ENCODE measurements at regions of chr19 and their contacts with region 1.

Region 1: GRCh38 chr19:6577476-6578125 is 13.3 kb downstream of the CD70 start:
- DNase-seq: peak; percentile 79 to 94 (median 90)
- H3K4me3 ChIP-seq: peak overlapping the region in 1 of 3 experiments; percentile 26
- H3K4me3 Mint-ChIP-seq: no peak overlapping the region
- H3K27ac ChIP-seq: peak overlapping the region; percentile 78 to 86
- H3K27ac Mint-ChIP-seq: peak overlapping the region in 4 of 7 donors; percentile 82 to 92 (median 92)
- H3K4me1 ChIP-seq: peaks cover 37 to 50% of the 10 kb centered on the region in 2 donors
- H3K4me1 Mint-ChIP-seq: peaks cover 22% of the 10 kb centered on the region
- H3K27me3 ChIP-seq: no peaks in the 10 kb centered on the region
- H3K27me3 Mint-ChIP-seq: peaks cover 2 to 5% (median 5%) of the 10 kb centered on the region in 3 donors
- CTCF ChIP-seq: no peak

Region 2: GRCh38 chr19:6530386-6531161 is 47.0 kb before region 1 on chr19 and contains the start of gene TNFSF9:
- intact Hi-C with region 1: loop called (anchors 5 kb)
- DNase-seq: peak; percentile 64 to 77 (median 70)
- H3K4me3 ChIP-seq: peak within 1 kb of the TSS; percentile 50 to 72 (median 52)
- H3K4me3 Mint-ChIP-seq: peak within 1 kb of the TSS; percentile 85 to 97
- H3K27ac ChIP-seq: peak within 1 kb of the TSS; percentile 17 to 30
- H3K27ac Mint-ChIP-seq: peak within 1 kb of the TSS; percentile 46 to 91 (median 82)
- H3K4me1 ChIP-seq: peaks cover 49 to 56% of the 10 kb centered on the region in 2 donors
- H3K4me1 Mint-ChIP-seq: peaks cover 48% of the 10 kb centered on the region
- H3K27me3 ChIP-seq: peaks cover 2 to 14% of the 10 kb centered on the region in 2 donors
- H3K27me3 Mint-ChIP-seq: peaks cover 30 to 42% (median 36%) of the 10 kb centered on the region in 3 donors
- CTCF ChIP-seq: no peak
- polyA plus RNA-seq, gene TNFSF9: 3.7 to 4.9 (median 4.3) TPM

Region 3: DNA sequence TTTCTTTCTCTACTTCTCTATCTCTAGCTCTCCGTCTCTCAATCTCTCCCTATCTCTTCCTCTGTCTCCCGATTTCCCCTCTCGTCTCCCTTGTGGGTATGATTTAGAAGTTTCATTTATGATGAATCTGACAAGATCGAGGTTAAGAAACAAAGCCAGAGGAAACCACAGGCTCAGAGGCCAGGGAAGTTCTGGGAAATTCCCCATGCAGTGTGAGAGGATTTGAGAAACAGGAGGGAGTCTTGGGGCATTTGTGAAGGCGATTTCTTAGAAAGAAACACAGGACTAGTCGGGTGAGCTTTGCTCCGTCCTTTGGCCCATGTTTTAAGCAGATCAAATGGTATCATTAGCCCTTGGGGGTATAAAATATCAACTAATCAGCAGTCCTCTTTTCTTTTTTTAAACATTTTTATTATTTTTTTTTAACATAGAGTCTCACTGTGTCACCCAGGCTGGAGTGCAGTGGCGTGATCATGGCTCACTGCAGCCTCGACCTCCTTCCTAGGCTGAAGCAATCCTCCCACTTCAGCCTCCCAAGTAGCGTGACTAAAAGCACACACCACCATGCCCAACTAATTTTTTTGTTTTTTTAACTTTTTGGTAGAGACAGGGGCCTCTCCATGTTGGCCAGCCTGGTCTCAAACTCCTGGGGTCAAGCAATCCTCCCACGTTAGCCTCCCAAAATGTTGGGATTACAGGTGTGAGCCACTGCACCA is 21.0 kb before region 1 on chr19:
- intact Hi-C with region 1: no loop called
- DNase-seq: peak in 1 of 3 donors; percentile 76
- H3K4me3 ChIP-seq: no peak overlapping the region
- H3K4me3 Mint-ChIP-seq: no peak overlapping the region
- H3K27ac ChIP-seq: no peak overlapping the region
- H3K27ac Mint-ChIP-seq: no peak overlapping the region
- H3K4me1 ChIP-seq: peaks cover 3 to 5% of the 10 kb centered on the region in 2 donors
- H3K4me1 Mint-ChIP-seq: peaks cover 2% of the 10 kb centered on the region
- H3K27me3 ChIP-seq: peaks cover 0 to 2% of the 10 kb centered on the region in 2 donors
- H3K27me3 Mint-ChIP-seq: peaks cover 9 to 26% (median 16%) of the 10 kb centered on the region in 3 donors
- CTCF ChIP-seq: no peak

Region 4: GRCh38 chr19:6639439-6639838 is 61.8 kb after region 1 on chr19:
- intact Hi-C with region 1: no loop called
- DNase-seq: peak in 2 of 3 donors; percentile 18 to 71
- H3K4me3 ChIP-seq: no peak overlapping the region
- H3K4me3 Mint-ChIP-seq: peak overlapping the region in 1 of 2 donors; percentile 74
- H3K27ac ChIP-seq: no peak overlapping the region
- H3K27ac Mint-ChIP-seq: peak overlapping the region in 2 of 7 donors; percentile 25 to 31
- H3K4me1 ChIP-seq: peaks cover 15 to 16% of the 10 kb centered on the region in 2 donors
- H3K4me1 Mint-ChIP-seq: peaks cover 12% of the 10 kb centered on the region
- H3K27me3 ChIP-seq: peaks cover 17 to 57% of the 10 kb centered on the region in 2 donors
- H3K27me3 Mint-ChIP-seq: peaks cover 53 to 76% (median 60%) of the 10 kb centered on the region in 3 donors
- CTCF ChIP-seq: no peak